ENCODE measurements at regions of chr15 and their contacts with region 1.

Region 1: GRCh38 chr15:89556413-89557262 is 18.6 kb upstream of the TICRR start:
- DNase-seq: peak; percentile 57 to 74 (median 68)
- ATAC-seq: peak; percentile 84
- H3K4me3 ChIP-seq: no peak overlapping the region
- H3K27ac ChIP-seq: no peak overlapping the region
- H3K4me1 ChIP-seq: peaks cover 0 to 7% of the 10 kb centered on the region in 2 experiments; a peak in 2 of 5 replicates
- H3K27me3 ChIP-seq: peaks cover 10 to 35% of the 10 kb centered on the region in 2 experiments; a peak in 3 of 5 replicates
- CTCF ChIP-seq: peak; percentile 72 to 87 (median 73)
- EP300 ChIP-seq: no peak
- POLR2A ChIP-seq: no peak
- RAD21 ChIP-seq: peak in 1 of 2 experiments; percentile 67; a peak in 3 of 4 replicates

Region 2: DNA sequence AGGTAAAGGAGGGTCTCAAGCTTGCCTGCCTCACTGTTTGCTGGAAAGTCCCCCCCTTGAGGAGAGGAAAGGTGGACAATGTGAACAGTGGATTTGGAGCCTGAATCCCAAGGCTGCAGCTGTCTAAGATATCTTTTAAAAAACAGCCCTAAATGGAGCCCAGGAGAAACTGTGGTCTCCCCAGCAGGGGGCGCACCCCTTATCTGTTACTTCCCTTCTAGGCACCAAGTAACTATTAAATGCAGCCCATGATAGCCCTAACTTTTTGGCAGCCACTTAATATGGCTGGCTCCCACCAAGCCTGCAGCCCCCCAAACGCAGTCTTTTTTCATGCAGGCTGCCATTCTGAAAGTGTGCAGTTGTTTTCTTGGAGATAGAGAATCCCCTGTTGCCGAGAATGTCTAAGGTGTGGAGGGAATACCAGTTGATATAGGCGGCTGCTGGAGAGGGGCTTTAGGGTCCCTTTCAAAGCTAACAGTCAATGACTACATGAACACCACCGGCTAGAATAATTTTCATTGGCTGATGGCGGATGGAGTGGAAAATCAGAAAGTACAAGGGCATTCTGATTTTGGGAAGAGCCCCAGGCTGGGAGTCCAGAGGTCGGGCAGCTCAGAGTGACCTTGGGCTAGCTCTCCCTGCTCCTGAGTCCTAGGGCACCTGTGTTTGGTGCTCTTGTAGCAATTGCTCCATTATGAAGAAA is 61.6 kb before region 1 on chr15:
- CTCF ChIA-PET with region 1: interaction called, 7 read pairs
- POLR2A ChIA-PET with region 1: no interaction called
- in situ Hi-C with region 1: no loop called
- intact Hi-C with region 1: loop called (anchors 1 kb)
- DNase-seq: peak; percentile 41 to 63 (median 48)
- ATAC-seq: peak; percentile 81
- H3K4me3 ChIP-seq: no peak overlapping the region
- H3K27ac ChIP-seq: no peak overlapping the region
- H3K4me1 ChIP-seq: peaks cover 0 to 9% of the 10 kb centered on the region in 2 experiments; a peak in 2 of 5 replicates
- H3K27me3 ChIP-seq: peaks cover 20 to 57% of the 10 kb centered on the region in 2 experiments
- CTCF ChIP-seq: peak; percentile 67 to 78 (median 69)
- EP300 ChIP-seq: no peak
- POLR2A ChIP-seq: no peak
- RAD21 ChIP-seq: peak in 1 of 2 experiments; percentile 39; a peak in 3 of 4 replicates

Region 3: GRCh38 chr15:89575146-89575655 is 18.6 kb after region 1 on chr15 and contains the start of gene TICRR:
- CTCF ChIA-PET with region 1: no interaction called
- POLR2A ChIA-PET with region 1: interaction called, 12 read pairs
- in situ Hi-C with region 1: no loop called
- intact Hi-C with region 1: no loop called
- DNase-seq: peak; percentile 95 to 99 (median 97)
- ATAC-seq: peak; percentile 95
- H3K4me3 ChIP-seq: peak within 1 kb of the TSS; percentile 97
- H3K27ac ChIP-seq: peak within 1 kb of the TSS; percentile 94
- H3K4me1 ChIP-seq: peaks cover 7 to 12% of the 10 kb centered on the region in 2 experiments; a peak in 4 of 5 replicates
- H3K27me3 ChIP-seq: peaks cover 0 to 4% of the 10 kb centered on the region in 2 experiments; a peak in 1 of 5 replicates
- CTCF ChIP-seq: no peak
- EP300 ChIP-seq: no peak; the same call in 1 of the 2 replicates
- POLR2A ChIP-seq: peak; percentile 87
- RAD21 ChIP-seq: no peak
- polyA plus RNA-seq, gene TICRR: 0.84 to 1.0 TPM

Measured in K562 (cell line).